AG04449 (cell line): ENCODE measurements at regions of chr1 and their contacts with region 1.

Region 1: GRCh38 chr1:178031856-178032320 is 62.0 kb upstream of the RASAL2 start:
- DNase-seq: peak; percentile 74
- H3K4me3 ChIP-seq: no peak overlapping the region
- CTCF ChIP-seq: peak; percentile 83

Region 2: DNA sequence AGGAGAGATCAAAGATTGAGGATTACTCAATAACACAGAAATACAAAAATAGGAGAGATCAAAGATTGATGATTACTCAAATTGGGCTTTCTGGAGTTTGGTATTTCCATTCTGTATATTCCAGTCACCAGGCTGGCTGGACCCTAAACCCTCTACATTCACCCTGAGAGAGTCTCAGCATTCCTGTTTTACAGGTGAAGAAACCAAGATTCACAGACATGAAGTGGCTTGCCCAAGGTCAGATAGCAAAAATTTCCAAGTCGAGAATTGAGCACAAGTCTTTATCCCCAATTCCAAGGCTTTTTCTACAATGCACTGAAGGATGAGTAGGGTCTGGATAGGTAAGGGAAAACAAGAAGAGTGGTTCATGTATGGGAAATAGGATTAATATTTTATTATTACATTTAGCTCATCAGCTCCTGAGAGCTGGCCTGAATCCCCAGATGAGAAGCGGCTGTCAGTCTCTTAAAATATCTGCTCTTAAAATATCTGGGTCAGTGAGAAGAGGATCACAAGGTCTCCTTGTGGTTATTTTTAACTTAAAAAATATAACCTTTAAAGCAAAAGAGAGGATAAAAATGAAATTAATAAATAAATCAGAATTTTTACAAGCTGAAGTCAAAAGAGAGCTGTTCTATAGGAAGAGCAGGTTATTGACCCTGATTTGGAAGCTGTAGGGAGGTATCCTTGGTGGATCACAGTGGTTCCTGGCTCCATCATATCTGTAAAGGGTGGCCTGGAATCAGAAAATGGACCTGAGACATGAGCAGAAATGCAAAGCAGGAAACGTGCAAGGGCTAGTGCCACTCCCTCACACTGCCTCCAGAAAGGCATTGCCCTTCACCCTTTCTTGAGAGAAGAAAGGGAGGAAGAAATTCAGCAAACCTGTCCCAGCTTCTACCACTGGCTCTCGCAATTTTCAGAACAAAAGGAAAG is 32.9 kb before region 1 on chr1:
- CTCF ChIA-PET with region 1: interaction called, 24 read pairs
- POLR2A ChIA-PET with region 1: no interaction called
- DNase-seq: no peak
- H3K4me3 ChIP-seq: no peak overlapping the region
- CTCF ChIP-seq: no peak

Region 3: GRCh38 chr1:178020968-178021640 is 10.8 kb before region 1 on chr1:
- CTCF ChIA-PET with region 1: interaction called, 117 read pairs
- POLR2A ChIA-PET with region 1: no interaction called
- DNase-seq: no peak
- H3K4me3 ChIP-seq: no peak overlapping the region
- CTCF ChIP-seq: no peak

Region 4: GRCh38 chr1:178093205-178093957 is 61.5 kb after region 1 on chr1:
- CTCF ChIA-PET with region 1: interaction called, 24 read pairs
- POLR2A ChIA-PET with region 1: interaction called, 3 read pairs
- DNase-seq: peak; percentile 82
- H3K4me3 ChIP-seq: peak overlapping the region; percentile 91
- CTCF ChIP-seq: no peak

Region 5: DNA sequence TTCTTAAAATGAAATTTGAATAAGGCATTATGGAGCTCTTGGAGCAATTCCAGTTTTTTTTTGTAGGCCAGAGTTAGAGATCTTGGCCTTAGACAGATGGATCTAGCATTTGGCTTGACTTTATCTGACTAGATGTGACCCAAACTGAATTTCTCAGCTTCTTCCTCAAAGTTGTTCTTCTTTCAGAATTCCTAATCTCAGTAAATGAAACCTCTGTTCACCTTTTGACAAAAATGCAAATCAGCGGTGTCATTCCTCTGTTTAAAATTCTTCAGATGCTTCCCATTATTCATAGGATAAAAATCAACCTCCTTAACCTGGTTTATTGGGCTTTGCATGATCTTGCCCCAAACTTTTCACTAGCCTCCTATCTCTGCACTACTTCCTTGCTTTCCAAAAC is 239.6 kb after region 1 on chr1:
- CTCF ChIA-PET with region 1: interaction called, 11 read pairs
- POLR2A ChIA-PET with region 1: interaction called, 5 read pairs
- DNase-seq: no peak
- H3K4me3 ChIP-seq: no peak overlapping the region
- CTCF ChIP-seq: no peak

Region 6: GRCh38 chr1:178300352-178300699 is 268.4 kb after region 1 on chr1:
- CTCF ChIA-PET with region 1: interaction called, 24 read pairs
- POLR2A ChIA-PET with region 1: no interaction called
- DNase-seq: no peak
- H3K4me3 ChIP-seq: no peak overlapping the region
- CTCF ChIP-seq: no peak